WTC11 (cell line): ENCODE measurements at regions of chr18 and their contacts with region 1.

Region 1: DNA sequence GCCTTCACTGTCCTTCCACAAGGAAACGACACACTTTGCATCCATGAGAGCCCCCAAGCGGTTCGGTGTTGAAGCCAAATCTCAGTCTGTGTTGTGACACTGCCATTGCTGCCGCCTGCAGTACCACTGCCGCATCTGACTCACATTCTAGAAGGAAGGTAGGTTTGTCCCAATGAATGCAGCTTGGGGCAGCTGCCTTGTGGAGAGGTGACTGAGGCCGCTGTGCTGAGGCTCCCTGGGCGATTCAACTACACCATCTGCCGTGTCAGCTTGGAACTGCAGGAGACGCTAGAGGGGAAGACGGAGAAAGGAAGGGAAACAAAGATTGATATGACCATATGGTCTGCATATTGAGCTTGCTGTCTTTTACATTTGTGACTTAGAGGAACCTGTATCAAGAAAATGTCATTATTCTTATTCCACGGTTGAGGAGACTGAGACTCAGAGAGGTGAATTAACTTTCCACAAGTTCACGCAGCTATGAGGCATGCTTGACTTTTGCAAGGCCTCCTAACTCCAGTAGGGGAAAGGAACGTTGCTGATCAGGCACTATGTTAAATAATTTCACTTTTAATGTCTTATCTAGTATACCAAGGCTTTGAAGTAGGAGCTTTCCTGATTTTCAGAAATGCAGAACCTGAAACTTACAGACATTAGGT is 43.5 kb upstream of the LMAN1 start:
- DNase-seq: peak; percentile 88
- ATAC-seq: peak; percentile 100
- H3K4me3 Mint-ChIP-seq: no peak overlapping the region
- H3K27ac Mint-ChIP-seq: no peak overlapping the region
- H3K4me1 Mint-ChIP-seq: peaks cover 5% of the 10 kb centered on the region
- H3K27me3 Mint-ChIP-seq: peaks cover 8% of the 10 kb centered on the region
- CTCF ChIP-seq: peak; percentile 71

Region 2: GRCh38 chr18:59070181-59070912 is 332.2 kb before region 1 on chr18:
- CTCF ChIA-PET with region 1: no interaction called
- POLR2A ChIA-PET with region 1: no interaction called
- DNase-seq: peak; percentile 96
- ATAC-seq: peak; percentile 98
- H3K4me3 Mint-ChIP-seq: no peak overlapping the region
- H3K27ac Mint-ChIP-seq: no peak overlapping the region
- H3K4me1 Mint-ChIP-seq: no peaks in the 10 kb centered on the region
- H3K27me3 Mint-ChIP-seq: no peaks in the 10 kb centered on the region
- CTCF ChIP-seq: peak; percentile 82

Region 3: DNA sequence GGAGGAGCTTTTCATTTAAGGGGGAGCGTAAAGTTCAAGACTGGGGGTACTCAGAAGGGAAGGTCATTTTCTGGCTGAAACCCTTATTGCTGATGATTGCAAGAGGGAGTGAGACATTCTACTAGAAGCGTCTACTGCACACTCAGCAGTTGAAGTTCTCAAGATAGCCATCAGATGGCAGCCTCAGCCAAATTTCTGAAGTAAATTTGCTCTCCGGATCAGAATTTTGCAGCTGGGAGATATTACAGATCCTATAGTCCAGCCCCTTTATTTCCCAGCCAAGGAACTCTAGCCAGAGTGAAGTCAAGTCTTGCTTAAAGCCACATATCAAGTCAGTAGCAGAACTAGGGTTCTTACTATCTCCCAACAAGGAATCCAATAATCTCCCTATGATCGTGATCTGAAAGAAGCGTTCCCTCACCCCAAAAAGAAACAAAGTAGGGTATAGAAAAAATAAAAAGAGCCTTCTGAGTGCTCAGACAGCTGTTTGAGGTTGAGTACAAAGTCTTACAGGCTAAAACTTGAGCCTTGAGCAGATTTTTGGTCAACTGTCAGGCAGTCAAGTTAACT is 153.3 kb before region 1 on chr18:
- CTCF ChIA-PET with region 1: interaction called, 90 read pairs
- POLR2A ChIA-PET with region 1: no interaction called
- DNase-seq: peak; percentile 62
- ATAC-seq: peak; percentile 91
- H3K4me3 Mint-ChIP-seq: no peak overlapping the region
- H3K27ac Mint-ChIP-seq: no peak overlapping the region
- H3K4me1 Mint-ChIP-seq: no peaks in the 10 kb centered on the region; the same call in 1 of the 2 replicates
- H3K27me3 Mint-ChIP-seq: peaks cover 83% of the 10 kb centered on the region
- CTCF ChIP-seq: peak; percentile 62; the same call in 1 of the 2 replicates

Region 4: GRCh38 chr18:59303006-59303405 is 99.6 kb before region 1 on chr18:
- CTCF ChIA-PET with region 1: interaction called, 133 read pairs
- POLR2A ChIA-PET with region 1: interaction called, 3 read pairs
- DNase-seq: no peak
- ATAC-seq: no peak
- H3K4me3 Mint-ChIP-seq: no peak overlapping the region
- H3K27ac Mint-ChIP-seq: no peak overlapping the region
- H3K4me1 Mint-ChIP-seq: no peaks in the 10 kb centered on the region
- H3K27me3 Mint-ChIP-seq: peaks cover 34% of the 10 kb centered on the region
- CTCF ChIP-seq: no peak

Region 5: DNA sequence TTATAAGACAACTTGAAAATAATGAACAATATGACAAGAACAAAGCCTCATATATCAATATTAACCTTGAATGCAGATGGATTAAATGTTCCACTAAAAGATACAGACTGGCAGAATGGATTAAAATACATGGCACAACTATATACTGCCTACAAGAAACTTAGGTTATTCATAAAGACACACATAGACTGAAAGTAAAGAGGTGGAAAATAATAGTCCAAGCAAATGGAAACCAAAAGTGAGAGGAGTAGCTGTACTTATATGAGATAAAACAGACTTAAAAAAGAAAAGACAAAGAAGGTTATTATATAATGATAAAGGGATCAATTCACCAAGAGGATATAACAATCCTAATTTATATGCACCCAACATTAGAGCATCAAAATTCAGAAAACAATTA is 61.7 kb before region 1 on chr18:
- CTCF ChIA-PET with region 1: interaction called, 15 read pairs
- POLR2A ChIA-PET with region 1: no interaction called
- DNase-seq: no peak
- ATAC-seq: no peak
- H3K4me3 Mint-ChIP-seq: no peak overlapping the region
- H3K27ac Mint-ChIP-seq: no peak overlapping the region
- H3K4me1 Mint-ChIP-seq: peaks cover 16% of the 10 kb centered on the region
- H3K27me3 Mint-ChIP-seq: no peaks in the 10 kb centered on the region
- CTCF ChIP-seq: no peak

Region 6: GRCh38 chr18:59459369-59460079 is 57.0 kb after region 1 on chr18:
- CTCF ChIA-PET with region 1: interaction called, 12 read pairs
- POLR2A ChIA-PET with region 1: no interaction called
- DNase-seq: no peak
- ATAC-seq: peak; percentile 46; the same call in 1 of the 2 replicates
- H3K4me3 Mint-ChIP-seq: no peak overlapping the region
- H3K27ac Mint-ChIP-seq: no peak overlapping the region
- H3K4me1 Mint-ChIP-seq: peaks cover 22% of the 10 kb centered on the region
- H3K27me3 Mint-ChIP-seq: no peaks in the 10 kb centered on the region
- CTCF ChIP-seq: peak; percentile 62

Region 7: DNA sequence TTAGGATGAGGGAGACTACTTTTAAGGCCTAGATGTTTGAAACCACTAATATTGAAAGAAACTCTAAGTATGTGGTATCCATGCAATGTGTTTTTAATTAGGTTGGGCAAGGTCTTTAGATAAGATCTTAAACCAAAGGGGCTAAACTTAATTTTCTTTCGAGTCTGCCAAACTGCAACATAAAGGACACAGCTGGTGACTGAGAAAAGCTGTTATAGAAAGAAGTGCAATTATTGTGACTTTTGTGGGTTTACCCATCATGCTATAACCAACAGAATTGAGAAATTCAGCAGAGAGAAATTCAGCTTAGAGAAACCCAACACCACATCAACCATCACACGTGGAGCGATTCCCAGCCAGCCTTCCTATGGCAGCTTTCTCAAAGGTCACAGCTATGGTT is 76.0 kb after region 1 on chr18:
- CTCF ChIA-PET with region 1: no interaction called
- POLR2A ChIA-PET with region 1: no interaction called
- DNase-seq: no peak
- ATAC-seq: no peak
- H3K4me3 Mint-ChIP-seq: no peak overlapping the region
- H3K27ac Mint-ChIP-seq: no peak overlapping the region
- H3K4me1 Mint-ChIP-seq: no peaks in the 10 kb centered on the region
- H3K27me3 Mint-ChIP-seq: no peaks in the 10 kb centered on the region; the same call in none of the 2 replicates
- CTCF ChIP-seq: no peak

Region 8: DNA sequence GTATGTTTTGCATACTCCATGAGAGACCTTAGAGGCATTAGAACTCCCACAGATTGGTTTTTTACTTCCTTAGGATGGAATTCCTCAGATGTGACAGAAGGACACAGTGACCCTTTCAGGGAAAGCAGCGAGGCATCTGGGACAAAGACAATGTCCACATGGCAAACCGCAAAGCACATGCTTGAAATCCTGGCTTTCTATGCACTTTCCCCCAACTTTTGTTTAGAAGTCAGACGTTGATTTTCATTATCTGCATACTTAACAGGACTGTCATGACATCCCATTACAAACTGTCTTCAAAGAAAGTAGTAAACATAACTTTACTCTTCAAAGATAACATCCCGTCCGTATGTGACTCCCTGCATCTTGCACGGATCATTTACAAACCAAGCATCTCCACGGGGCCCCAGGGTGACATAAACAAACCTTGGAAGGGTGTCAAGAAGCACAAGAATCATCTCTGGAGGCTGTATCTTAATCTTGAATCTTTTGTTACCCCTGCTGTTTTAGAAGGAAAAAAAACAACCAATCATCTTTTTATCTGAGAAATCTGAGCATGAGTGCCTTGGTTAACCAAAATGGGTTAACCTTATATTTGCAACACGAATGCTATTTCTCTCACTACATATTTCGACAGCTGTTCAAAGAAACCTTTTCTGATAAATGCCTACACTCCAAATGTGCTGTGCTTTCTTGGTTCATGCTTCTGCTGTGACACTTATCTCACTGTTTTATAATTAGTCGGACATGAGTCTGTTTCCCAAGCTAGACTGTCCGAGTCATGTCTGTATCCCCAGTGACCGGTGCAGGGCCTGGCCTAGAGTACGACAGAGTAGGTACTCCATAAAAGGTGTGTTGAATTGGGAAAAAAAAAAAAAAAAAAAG is 203.9 kb after region 1 on chr18:
- CTCF ChIA-PET with region 1: no interaction called
- POLR2A ChIA-PET with region 1: no interaction called
- DNase-seq: no peak
- ATAC-seq: no peak
- H3K4me3 Mint-ChIP-seq: no peak overlapping the region
- H3K27ac Mint-ChIP-seq: no peak overlapping the region
- H3K4me1 Mint-ChIP-seq: 0 out of 2 replicates have a peak, but pooled peaks cover 3% of the 10 kb centered on the region
- H3K27me3 Mint-ChIP-seq: no peaks in the 10 kb centered on the region
- CTCF ChIP-seq: no peak